Activated CD4-positive, alpha-beta T cell treated with anti-CD3 and anti-CD28 coated beads for 36 hours (primary cell): ENCODE measurements at regions of chr7 and their contacts with region 1.

Region 1: GRCh38 chr7:101153969-101154692 is at the start of gene AP1S1:
- DNase-seq: peak; percentile 97
- ATAC-seq: peak; percentile 90
- H3K4me3 Mint-ChIP-seq: peak within 1 kb of the TSS; percentile 76
- H3K27ac Mint-ChIP-seq: peak within 1 kb of the TSS; percentile 22
- H3K4me1 Mint-ChIP-seq: peaks cover 12% of the 10 kb centered on the region
- H3K27me3 Mint-ChIP-seq: peaks cover 2% of the 10 kb centered on the region
- total RNA-seq, gene AP1S1: 33.7 to 43.0 TPM

Region 2: GRCh38 chr7:101085162-101085987 is 68.8 kb before region 1 on chr7 and contains the start of gene TRIM56:
- CTCF ChIA-PET with region 1: no interaction called
- POLR2A ChIA-PET with region 1: no interaction called
- intact Hi-C with region 1: loop called in 1 of 2 experiments (anchors 1 kb)
- DNase-seq: peak; percentile 88
- ATAC-seq: peak; percentile 90
- H3K4me3 Mint-ChIP-seq: peak within 1 kb of the TSS; percentile 94
- H3K27ac Mint-ChIP-seq: peak within 1 kb of the TSS; percentile 98
- H3K4me1 Mint-ChIP-seq: peaks cover 26% of the 10 kb centered on the region
- H3K27me3 Mint-ChIP-seq: no peaks in the 10 kb centered on the region
- total RNA-seq, gene TRIM56: 35.3 to 40.8 TPM

Region 3: DNA sequence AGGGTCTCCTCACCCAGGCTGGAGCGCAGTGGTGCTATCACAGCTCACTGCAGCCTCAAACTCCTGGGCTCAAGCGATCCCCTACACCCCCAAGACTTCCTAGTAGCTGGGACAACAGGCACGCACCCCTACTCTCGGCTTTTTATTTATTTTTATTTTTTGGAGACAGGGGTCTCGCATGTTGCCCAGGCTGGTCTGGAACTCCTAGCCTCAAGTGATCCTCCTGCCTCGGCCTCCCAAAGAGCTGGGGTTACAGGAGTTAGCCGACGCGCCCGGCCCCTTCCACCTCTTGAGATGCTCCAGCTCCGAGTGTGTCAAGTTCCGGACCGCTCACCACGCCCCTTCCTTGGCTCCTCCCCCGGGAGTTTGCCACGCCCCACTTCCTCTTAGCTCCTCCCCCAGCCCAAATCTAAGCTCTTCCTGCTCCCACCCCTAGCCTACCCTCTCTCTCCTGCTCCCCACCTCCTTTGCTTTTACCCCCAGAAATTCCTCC is 19.7 kb after region 1 on chr7:
- CTCF ChIA-PET with region 1: interaction called, 4 read pairs
- POLR2A ChIA-PET with region 1: no interaction called
- intact Hi-C with region 1: loop called (anchors 1 to 2 kb)
- DNase-seq: peak; percentile 85
- ATAC-seq: peak; percentile 86
- H3K4me3 Mint-ChIP-seq: peak overlapping the region; percentile 41
- H3K27ac Mint-ChIP-seq: no peak overlapping the region
- H3K4me1 Mint-ChIP-seq: peaks cover 50% of the 10 kb centered on the region
- H3K27me3 Mint-ChIP-seq: peaks cover 78% of the 10 kb centered on the region

Region 4: DNA sequence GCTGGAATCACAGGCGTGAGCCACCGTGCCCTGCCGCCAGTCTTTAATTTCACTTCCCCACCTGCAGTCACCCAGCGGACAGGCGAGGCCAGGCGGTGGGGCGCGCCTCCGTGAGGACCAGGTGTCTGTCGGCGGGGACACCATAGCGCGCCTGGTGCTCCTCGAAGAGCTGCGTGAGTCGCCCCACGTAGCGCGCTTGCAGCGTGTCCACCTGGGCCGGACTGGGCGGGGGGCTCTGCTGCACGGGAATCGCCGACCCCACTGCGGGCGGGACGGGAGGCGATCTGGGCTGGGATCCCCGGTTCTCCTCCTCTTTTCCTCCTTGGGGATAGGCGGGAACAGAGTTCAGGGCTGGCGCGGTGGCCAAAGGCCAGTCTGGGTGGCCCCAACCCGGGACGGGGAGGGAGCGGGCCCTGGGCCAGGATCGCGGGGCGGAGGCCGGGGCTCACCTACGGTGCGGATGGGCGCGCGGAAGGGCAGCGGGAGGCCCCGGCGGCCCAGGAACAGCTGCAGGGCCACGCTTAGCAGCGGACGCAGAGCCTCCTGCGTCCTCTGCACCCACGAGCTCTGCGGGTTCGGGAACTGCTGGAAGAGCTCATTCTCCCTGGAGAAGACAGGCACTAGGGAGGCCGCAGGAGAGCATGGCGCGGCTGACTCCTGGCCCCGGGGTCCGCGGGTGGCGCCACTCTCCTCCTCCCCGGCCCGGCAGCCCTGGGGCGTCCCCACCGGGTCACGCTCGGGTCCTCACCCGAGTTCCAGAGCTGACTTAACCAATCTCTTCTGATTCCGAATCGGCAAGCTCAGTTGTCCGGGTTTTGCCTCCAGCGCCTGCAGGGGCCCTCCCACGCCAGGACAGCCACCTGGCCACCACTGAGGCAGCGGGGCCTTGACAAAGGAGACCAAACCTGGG is 47.8 kb after region 1 on chr7:
- CTCF ChIA-PET with region 1: no interaction called
- POLR2A ChIA-PET with region 1: no interaction called
- intact Hi-C with region 1: no loop called
- DNase-seq: no peak
- ATAC-seq: no peak
- H3K4me3 Mint-ChIP-seq: no peak overlapping the region
- H3K27ac Mint-ChIP-seq: no peak overlapping the region
- H3K4me1 Mint-ChIP-seq: peaks cover 4% of the 10 kb centered on the region
- H3K27me3 Mint-ChIP-seq: peaks cover 21% of the 10 kb centered on the region

Region 5: DNA sequence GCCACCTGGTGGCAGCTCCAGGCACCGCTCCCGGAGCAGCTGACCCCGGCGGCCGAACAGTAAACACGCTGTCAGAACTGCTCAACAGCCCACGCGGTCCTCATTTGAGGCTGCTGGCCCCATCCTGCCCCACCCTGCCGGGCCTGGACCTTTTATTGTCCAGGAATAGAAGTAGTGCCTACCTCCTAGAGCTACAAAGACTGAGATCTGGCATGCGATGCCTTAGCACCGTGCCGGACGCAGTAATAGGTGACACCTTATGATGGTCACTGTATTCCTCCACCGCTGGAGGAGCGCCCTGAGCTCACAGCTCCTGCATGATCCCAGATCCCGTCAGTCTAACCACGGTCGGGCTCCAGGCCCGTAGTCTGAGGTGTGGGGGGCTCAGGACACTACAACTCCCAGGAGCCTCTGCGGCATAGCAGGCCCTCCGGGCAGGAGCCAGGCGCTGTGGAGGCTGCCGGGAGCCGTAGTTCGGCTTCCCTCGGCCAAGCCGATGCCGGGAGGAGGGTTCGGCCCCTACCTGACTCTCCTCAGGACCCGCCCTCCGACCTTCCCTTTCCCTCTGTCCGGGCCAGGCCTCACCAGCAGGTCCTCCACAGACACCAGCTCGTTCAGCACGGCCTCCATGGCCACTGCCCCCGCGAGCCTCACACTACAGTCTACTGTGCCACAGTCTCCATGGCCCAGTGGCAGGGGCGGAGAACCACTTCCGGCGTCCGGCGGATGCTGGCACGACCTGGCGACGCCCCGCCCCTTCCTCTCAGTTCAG is 90.4 kb after region 1 on chr7 and contains the start of gene FIS1:
- CTCF ChIA-PET with region 1: interaction called, 3 read pairs
- POLR2A ChIA-PET with region 1: no interaction called
- intact Hi-C with region 1: loop called in 1 of 2 experiments (anchors 2 kb)
- DNase-seq: peak; percentile 97
- ATAC-seq: peak; percentile 96
- H3K4me3 Mint-ChIP-seq: peak within 1 kb of the TSS; percentile 97
- H3K27ac Mint-ChIP-seq: peak within 1 kb of the TSS; percentile 97
- H3K4me1 Mint-ChIP-seq: peaks cover 25% of the 10 kb centered on the region
- H3K27me3 Mint-ChIP-seq: no peaks in the 10 kb centered on the region
- total RNA-seq, gene FIS1: 70.5 to 92.6 TPM

Region 6: DNA sequence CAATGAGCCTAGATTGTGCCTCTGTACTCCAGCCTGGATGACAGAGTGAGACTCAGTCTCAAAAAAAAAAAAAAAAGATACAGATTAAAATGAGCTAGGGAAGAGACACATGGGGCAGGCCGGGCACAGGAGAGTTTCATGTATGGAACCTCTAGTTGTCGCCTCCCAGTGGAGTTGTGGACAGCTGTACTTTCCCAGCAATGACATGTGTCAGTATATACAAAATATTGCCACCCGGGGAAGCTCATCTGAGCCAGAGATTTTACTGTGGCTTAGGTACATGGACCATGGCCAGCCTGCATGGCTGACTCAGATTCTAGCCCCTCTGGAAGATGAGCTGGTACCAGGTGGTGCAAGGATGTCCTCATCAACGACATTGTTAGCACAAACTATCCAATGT is 295.9 kb after region 1 on chr7:
- CTCF ChIA-PET with region 1: no interaction called
- POLR2A ChIA-PET with region 1: no interaction called
- intact Hi-C with region 1: no loop called
- DNase-seq: no peak
- ATAC-seq: no peak
- H3K4me3 Mint-ChIP-seq: no peak overlapping the region
- H3K27ac Mint-ChIP-seq: no peak overlapping the region
- H3K4me1 Mint-ChIP-seq: no peaks in the 10 kb centered on the region
- H3K27me3 Mint-ChIP-seq: no peaks in the 10 kb centered on the region